RWPE1 (cell line): ENCODE measurements at regions of chr11 and their contacts with region 1.

Region 1: GRCh38 chr11:93895106-93895862 is 44.9 kb upstream of the VSTM5 start:
- DNase-seq: peak; percentile 46
- H3K27ac ChIP-seq: no peak overlapping the region
- CTCF ChIP-seq: peak; percentile 73

Region 2: GRCh38 chr11:93704237-93704636 is 191.0 kb before region 1 on chr11:
- CTCF ChIA-PET with region 1: no interaction called
- POLR2A ChIA-PET with region 1: no interaction called
- DNase-seq: no peak
- H3K27ac ChIP-seq: no peak overlapping the region
- CTCF ChIP-seq: no peak

Region 3: GRCh38 chr11:93905384-93905783 is 10.1 kb after region 1 on chr11:
- CTCF ChIA-PET with region 1: interaction called, 19 read pairs
- POLR2A ChIA-PET with region 1: no interaction called
- DNase-seq: no peak
- H3K27ac ChIP-seq: no peak overlapping the region
- CTCF ChIP-seq: no peak

Region 4: DNA sequence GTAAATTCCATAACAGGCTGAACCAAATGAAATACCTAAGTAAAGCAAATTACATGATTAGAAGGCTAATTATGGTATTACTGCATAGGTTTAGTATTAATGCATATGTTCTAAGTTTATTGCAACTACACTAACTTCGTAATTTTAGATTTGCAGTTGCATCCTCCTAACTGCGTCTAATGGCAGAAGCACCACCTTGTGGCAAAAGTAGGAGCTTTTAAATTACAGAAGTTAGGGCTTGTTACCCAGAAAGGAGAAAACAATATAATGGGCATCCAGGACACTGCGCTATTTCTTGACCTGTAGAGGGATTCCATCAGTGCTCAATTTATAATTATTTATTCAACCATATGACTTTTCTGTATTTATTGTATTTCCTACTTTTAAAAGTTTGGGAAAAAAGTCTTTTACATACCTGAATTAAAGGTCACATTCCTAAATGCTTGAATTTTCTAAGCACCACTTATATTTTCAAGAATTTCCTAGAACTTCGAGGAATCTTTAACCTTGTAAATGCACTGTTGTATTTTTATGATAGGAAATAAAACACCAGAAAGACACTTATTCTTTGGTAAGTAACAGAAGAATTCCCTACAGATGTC is 522.2 kb after region 1 on chr11:
- CTCF ChIA-PET with region 1: interaction called, 16 read pairs
- POLR2A ChIA-PET with region 1: no interaction called
- DNase-seq: no peak
- H3K27ac ChIP-seq: no peak overlapping the region
- CTCF ChIP-seq: peak; percentile 62

Region 5: GRCh38 chr11:94504689-94505293 is 609.5 kb after region 1 on chr11:
- CTCF ChIA-PET with region 1: interaction called, 11 read pairs
- POLR2A ChIA-PET with region 1: no interaction called
- DNase-seq: peak; percentile 49
- H3K27ac ChIP-seq: no peak overlapping the region
- CTCF ChIP-seq: peak; percentile 76